MCF 10A (cell line): ENCODE measurements at regions of chrX and their contacts with region 1.

Region 1: GRCh38 chrX:115616943-115617563 is 56.1 kb downstream of the PLS3 start:
- DNase-seq: peak; percentile 80
- H3K4me3 Mint-ChIP-seq: peak overlapping the region; percentile 25
- H3K27ac Mint-ChIP-seq: peak overlapping the region; percentile 71
- H3K4me1 Mint-ChIP-seq: peaks cover 16% of the 10 kb centered on the region
- H3K27me3 Mint-ChIP-seq: peaks cover 66% of the 10 kb centered on the region
- CTCF ChIP-seq: no peak

Region 2: GRCh38 chrX:115204040-115204439 is 413.0 kb before region 1 on chrX:
- CTCF ChIA-PET with region 1: no interaction called
- POLR2A ChIA-PET with region 1: no interaction called
- intact Hi-C with region 1: no loop called
- DNase-seq: no peak
- H3K4me3 Mint-ChIP-seq: no peak overlapping the region
- H3K27ac Mint-ChIP-seq: no peak overlapping the region
- H3K4me1 Mint-ChIP-seq: no peaks in the 10 kb centered on the region
- H3K27me3 Mint-ChIP-seq: peaks cover 50% of the 10 kb centered on the region
- CTCF ChIP-seq: no peak

Region 3: GRCh38 chrX:115393271-115393670 is 223.8 kb before region 1 on chrX:
- CTCF ChIA-PET with region 1: no interaction called
- POLR2A ChIA-PET with region 1: no interaction called
- intact Hi-C with region 1: no loop called
- DNase-seq: no peak
- H3K4me3 Mint-ChIP-seq: no peak overlapping the region
- H3K27ac Mint-ChIP-seq: no peak overlapping the region
- H3K4me1 Mint-ChIP-seq: peaks cover 6% of the 10 kb centered on the region
- H3K27me3 Mint-ChIP-seq: peaks cover 48% of the 10 kb centered on the region
- CTCF ChIP-seq: no peak

Region 4: DNA sequence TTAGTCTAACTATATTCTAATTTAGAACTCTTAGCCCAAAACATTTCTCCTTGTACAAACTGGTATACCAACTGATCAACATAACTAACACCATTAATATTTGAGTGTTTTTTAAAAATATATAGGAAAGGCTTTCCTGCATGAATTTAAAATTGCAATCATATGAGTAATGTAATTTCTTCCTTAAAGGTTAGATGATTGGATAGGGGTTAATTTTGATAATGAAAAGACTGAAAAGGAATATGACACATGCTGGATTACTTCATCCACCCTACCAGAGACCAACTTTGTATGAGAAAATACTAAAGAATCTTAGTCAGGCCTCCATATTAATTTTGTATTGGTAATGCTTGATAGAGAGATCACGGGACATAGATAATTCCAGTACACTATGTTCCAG is 81.2 kb before region 1 on chrX:
- CTCF ChIA-PET with region 1: no interaction called
- POLR2A ChIA-PET with region 1: no interaction called
- intact Hi-C with region 1: no loop called
- DNase-seq: no peak
- H3K4me3 Mint-ChIP-seq: no peak overlapping the region
- H3K27ac Mint-ChIP-seq: no peak overlapping the region
- H3K4me1 Mint-ChIP-seq: no peaks in the 10 kb centered on the region
- H3K27me3 Mint-ChIP-seq: peaks cover 69% of the 10 kb centered on the region
- CTCF ChIP-seq: no peak

Region 5: DNA sequence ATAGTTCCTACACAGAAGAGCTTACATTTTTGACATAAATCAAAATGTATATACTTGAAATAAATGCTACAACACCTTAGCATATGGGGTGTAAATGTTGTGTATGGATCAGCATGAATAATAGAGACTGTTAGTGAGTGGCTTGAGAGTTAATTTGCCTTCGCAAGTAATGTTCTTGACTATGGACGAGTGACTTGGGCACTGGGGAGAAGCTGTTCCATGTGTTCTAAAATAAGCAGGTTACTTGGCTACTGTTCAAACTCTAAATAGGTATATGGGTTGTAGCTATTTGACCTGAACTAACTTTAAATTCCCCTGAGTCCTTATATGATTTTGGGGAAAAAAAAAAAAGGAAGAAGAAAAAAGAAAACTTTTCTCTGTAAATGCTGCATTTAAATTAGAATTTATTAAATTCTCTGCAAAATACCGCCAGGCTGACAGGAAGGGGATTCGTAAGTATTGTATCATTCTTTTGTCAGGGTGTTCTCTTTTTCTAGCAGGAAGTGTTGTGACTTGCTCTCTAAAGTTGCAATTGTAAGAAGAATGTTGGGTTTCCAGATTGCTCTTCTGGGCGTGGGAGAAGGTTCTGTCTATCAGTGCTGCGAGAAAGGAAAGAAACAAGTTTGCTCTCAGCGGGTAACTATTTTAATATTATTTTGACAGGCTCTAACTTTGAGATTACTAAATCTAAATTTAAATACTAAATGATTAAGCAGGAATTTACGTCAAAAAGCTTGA is 23.9 kb before region 1 on chrX:
- CTCF ChIA-PET with region 1: interaction called, 4 read pairs
- POLR2A ChIA-PET with region 1: interaction called, 31 read pairs
- intact Hi-C with region 1: no loop called
- DNase-seq: peak; percentile 56
- H3K4me3 Mint-ChIP-seq: peak overlapping the region; percentile 72
- H3K27ac Mint-ChIP-seq: peak overlapping the region; percentile 87
- H3K4me1 Mint-ChIP-seq: peaks cover 12% of the 10 kb centered on the region
- H3K27me3 Mint-ChIP-seq: peaks cover 92% of the 10 kb centered on the region
- CTCF ChIP-seq: no peak

Region 6: DNA sequence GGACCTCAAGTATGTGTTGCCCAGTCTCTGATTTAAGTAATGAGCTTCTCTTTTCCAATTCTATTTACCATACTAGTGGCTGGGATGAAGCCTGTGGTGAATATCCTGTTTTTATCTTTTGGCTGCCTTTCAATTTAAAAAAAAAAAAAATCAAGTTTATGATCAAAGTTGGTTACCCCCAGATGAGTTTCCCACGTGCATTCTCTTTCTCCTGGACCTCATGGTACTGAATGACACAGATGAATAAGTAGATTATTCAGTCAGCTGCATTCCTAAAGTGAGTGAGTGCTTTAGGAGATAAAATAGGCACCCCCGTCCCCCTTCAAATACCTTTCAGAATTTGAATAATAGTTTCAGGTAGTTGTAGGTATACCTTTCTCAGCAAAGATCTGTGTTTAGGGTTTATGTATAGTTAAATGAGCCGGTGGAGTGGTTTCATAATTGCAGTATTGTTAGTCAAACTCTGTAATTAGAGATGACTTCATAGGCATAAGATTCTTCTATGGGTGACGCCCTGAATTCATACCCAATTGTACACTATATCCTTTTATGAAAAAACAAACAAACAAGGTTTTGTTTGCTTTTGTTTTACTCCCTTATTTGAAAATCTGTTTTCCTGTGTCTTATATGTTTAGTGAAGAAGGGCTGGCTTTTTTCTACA is 14.2 kb before region 1 on chrX:
- CTCF ChIA-PET with region 1: interaction called, 5 read pairs
- POLR2A ChIA-PET with region 1: interaction called, 19 read pairs
- intact Hi-C with region 1: no loop called
- DNase-seq: no peak
- H3K4me3 Mint-ChIP-seq: peak overlapping the region; percentile 13
- H3K27ac Mint-ChIP-seq: peak overlapping the region; percentile 42
- H3K4me1 Mint-ChIP-seq: no peaks in the 10 kb centered on the region
- H3K27me3 Mint-ChIP-seq: peaks cover 50% of the 10 kb centered on the region
- CTCF ChIP-seq: no peak